ENCODE measurements at regions of chr1 and their contacts with region 1.

Region 1: DNA sequence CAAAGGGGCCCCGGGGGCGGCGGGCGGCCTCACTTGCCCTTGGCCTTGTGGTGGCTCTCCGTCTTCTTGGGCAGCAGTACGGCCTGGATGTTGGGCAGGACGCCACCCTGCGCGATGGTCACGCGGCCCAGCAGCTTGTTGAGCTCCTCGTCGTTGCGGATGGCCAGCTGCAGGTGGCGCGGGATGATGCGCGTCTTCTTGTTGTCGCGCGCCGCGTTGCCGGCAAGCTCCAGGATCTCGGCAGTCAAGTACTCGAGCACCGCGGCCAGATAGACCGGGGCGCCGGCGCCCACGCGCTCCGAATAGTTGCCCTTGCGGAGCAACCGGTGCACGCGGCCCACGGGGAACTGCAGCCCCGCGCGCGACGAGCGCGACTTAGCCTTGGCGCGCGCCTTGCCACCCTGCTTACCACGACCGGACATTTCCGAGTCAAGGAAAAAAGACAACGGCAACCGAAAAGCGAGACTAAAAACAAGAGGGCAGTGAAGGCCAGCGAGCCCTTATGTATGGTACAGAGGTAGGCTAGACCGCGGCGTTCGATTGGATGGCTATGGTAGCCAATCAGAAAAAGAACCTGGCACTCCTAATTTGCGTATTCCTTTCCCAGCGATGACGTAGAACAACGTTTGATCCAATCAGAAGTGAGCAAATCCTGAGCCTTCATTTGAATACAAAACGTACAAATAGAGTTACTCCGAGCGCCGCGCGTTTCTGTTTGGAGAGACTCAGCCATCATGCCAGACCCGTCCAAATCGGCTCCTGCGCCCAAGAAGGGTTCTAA is 29.6 kb upstream of the RNF187 start:
- DNase-seq: peak; percentile 61 to 95 (median 88)
- ATAC-seq: peak; percentile 88
- H3K4me3 ChIP-seq: peak overlapping the region; percentile 78
- H3K4me3 Mint-ChIP-seq: peak overlapping the region; percentile 80 to 97 (median 94)
- H3K27ac ChIP-seq: peak overlapping the region; percentile 87
- H3K27ac Mint-ChIP-seq: peak overlapping the region; percentile 93 to 99 (median 98)
- H3K4me1 ChIP-seq: peaks cover 14 to 17% of the 10 kb centered on the region in 2 donors
- H3K4me1 Mint-ChIP-seq: peaks cover 26 to 64% (median 42%) of the 10 kb centered on the region in 7 donors
- H3K27me3 ChIP-seq: no peaks in the 10 kb centered on the region
- H3K27me3 Mint-ChIP-seq: peaks cover 0 to 7% (median 2%) of the 10 kb centered on the region in 5 donors

Region 2: GRCh38 chr1:227849251-227849650 is 608.3 kb before region 1 on chr1:
- CTCF ChIA-PET with region 1: no interaction called
- POLR2A ChIA-PET with region 1: no interaction called
- intact Hi-C with region 1: no loop called
- DNase-seq: peak in 4 of 9 donors; percentile 6 to 32 (median 19)
- ATAC-seq: peak; percentile 27
- H3K4me3 ChIP-seq: no peak overlapping the region
- H3K4me3 Mint-ChIP-seq: no peak overlapping the region
- H3K27ac ChIP-seq: no peak overlapping the region
- H3K27ac Mint-ChIP-seq: peak overlapping the region in 2 of 9 donors; percentile 38 to 66
- H3K4me1 ChIP-seq: no peaks in the 10 kb centered on the region
- H3K4me1 Mint-ChIP-seq: peaks cover 0 to 13% (median 7%) of the 10 kb centered on the region in 7 donors
- H3K27me3 ChIP-seq: no peaks in the 10 kb centered on the region
- H3K27me3 Mint-ChIP-seq: peaks cover 0 to 7% (median 0%) of the 10 kb centered on the region in 5 donors

Region 3: DNA sequence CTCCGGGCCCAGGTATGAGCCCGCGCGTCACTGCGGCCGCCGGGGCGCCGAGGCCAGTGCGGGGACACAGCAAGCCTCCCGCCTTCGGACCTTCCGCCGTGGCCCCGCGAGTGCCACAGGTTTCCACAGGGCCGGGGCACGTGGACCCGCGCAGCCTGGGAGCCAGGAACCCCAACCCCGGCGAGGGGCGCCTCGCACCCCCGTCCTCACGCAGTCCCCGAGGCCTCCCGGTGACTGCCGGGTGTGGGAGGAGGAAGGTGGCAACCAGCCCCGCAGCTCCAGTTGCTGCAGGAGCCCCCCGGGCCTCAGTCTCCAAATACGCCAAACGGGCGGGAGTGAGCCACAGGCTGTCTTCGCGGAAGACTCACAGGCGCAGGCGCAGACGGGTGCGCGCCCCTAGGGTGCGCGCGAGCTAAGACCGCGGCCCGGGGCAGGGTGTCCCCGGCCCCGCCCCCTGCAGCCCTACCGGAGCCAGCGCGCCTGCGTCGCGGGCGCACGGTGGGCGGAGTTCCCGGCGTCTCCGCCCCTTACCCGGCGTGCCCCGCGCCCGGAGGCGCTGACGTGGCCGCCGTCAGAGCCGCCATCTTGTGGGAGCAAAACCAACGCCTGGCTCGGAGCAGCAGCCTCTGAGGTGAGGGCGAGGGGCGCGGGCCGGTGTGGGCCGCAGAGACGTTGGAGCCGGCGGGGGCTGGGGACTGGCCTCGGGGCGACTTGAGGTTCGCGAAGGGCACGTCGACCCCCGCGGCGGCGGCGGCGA is 375.3 kb before region 1 on chr1 and contains the start of gene ARF1:
- CTCF ChIA-PET with region 1: no interaction called
- POLR2A ChIA-PET with region 1: no interaction called
- intact Hi-C with region 1: loop called in 1 of 2 experiments (anchors 2 kb)
- DNase-seq: peak; percentile 89 to 99 (median 96)
- ATAC-seq: peak; percentile 97
- H3K4me3 ChIP-seq: peak within 1 kb of the TSS; percentile 88
- H3K4me3 Mint-ChIP-seq: peak within 1 kb of the TSS; percentile 89 to 97 (median 95)
- H3K27ac ChIP-seq: peak within 1 kb of the TSS; percentile 97
- H3K27ac Mint-ChIP-seq: peak within 1 kb of the TSS; percentile 76 to 97 (median 95)
- H3K4me1 ChIP-seq: peaks cover 41 to 43% of the 10 kb centered on the region in 2 donors
- H3K4me1 Mint-ChIP-seq: peaks cover 36 to 66% (median 52%) of the 10 kb centered on the region in 7 donors
- H3K27me3 ChIP-seq: no peaks in the 10 kb centered on the region
- H3K27me3 Mint-ChIP-seq: no peaks in the 10 kb centered on the region
- total RNA-seq, gene ARF1: 198 to 390 (median 259) TPM

Region 4: GRCh38 chr1:228131766-228132165 is 325.8 kb before region 1 on chr1:
- CTCF ChIA-PET with region 1: no interaction called
- POLR2A ChIA-PET with region 1: no interaction called
- intact Hi-C with region 1: loop called in 1 of 2 experiments (anchors 2 kb)
- DNase-seq: peak in 1 of 9 donors; percentile 6
- ATAC-seq: no peak
- H3K4me3 ChIP-seq: no peak overlapping the region
- H3K4me3 Mint-ChIP-seq: no peak overlapping the region
- H3K27ac ChIP-seq: no peak overlapping the region
- H3K27ac Mint-ChIP-seq: no peak overlapping the region
- H3K4me1 ChIP-seq: peaks cover 0 to 11% of the 10 kb centered on the region in 2 donors
- H3K4me1 Mint-ChIP-seq: peaks cover 0 to 11% (median 7%) of the 10 kb centered on the region in 7 donors
- H3K27me3 ChIP-seq: no peaks in the 10 kb centered on the region
- H3K27me3 Mint-ChIP-seq: peaks cover 0 to 53% (median 9%) of the 10 kb centered on the region in 5 donors

Region 5: GRCh38 chr1:228212966-228213844 is 244.4 kb before region 1 on chr1:
- CTCF ChIA-PET with region 1: no interaction called
- POLR2A ChIA-PET with region 1: no interaction called
- intact Hi-C with region 1: loop called (anchors 1 kb)
- DNase-seq: peak; percentile 71 to 88 (median 82)
- ATAC-seq: peak; percentile 95
- H3K4me3 ChIP-seq: peak overlapping the region; percentile 68
- H3K4me3 Mint-ChIP-seq: peak overlapping the region; percentile 77 to 95 (median 91)
- H3K27ac ChIP-seq: peak overlapping the region; percentile 73
- H3K27ac Mint-ChIP-seq: peak overlapping the region; percentile 28 to 96 (median 88)
- H3K4me1 ChIP-seq: no peaks in the 10 kb centered on the region
- H3K4me1 Mint-ChIP-seq: peaks cover 3 to 13% (median 5%) of the 10 kb centered on the region in 7 donors
- H3K27me3 ChIP-seq: no peaks in the 10 kb centered on the region
- H3K27me3 Mint-ChIP-seq: no peaks in the 10 kb centered on the region

Region 6: DNA sequence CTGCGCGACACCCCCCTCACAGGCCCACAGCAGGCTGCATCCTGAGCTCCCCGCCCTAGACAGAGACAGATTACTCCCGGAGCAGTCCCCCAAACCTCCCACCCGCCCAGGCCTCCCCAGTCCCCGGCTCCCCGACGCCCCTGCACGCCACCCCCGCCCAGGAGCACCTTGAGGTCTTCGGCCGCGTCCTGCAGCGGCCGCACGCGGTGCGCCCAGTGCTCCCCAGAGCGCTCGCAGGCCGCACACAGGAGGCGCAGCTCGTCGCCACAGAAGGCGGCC is 51.7 kb before region 1 on chr1:
- CTCF ChIA-PET with region 1: no interaction called
- POLR2A ChIA-PET with region 1: interaction called, 9 read pairs
- intact Hi-C with region 1: loop called (anchors 1 kb)
- DNase-seq: no peak
- ATAC-seq: no peak
- H3K4me3 ChIP-seq: peak overlapping the region; percentile 74
- H3K4me3 Mint-ChIP-seq: peak overlapping the region; percentile 80 to 99 (median 94)
- H3K27ac ChIP-seq: peak overlapping the region; percentile 86
- H3K27ac Mint-ChIP-seq: peak overlapping the region; percentile 36 to 92 (median 80)
- H3K4me1 ChIP-seq: peaks cover 36 to 41% of the 10 kb centered on the region in 2 donors
- H3K4me1 Mint-ChIP-seq: peaks cover 46 to 77% (median 56%) of the 10 kb centered on the region in 7 donors
- H3K27me3 ChIP-seq: no peaks in the 10 kb centered on the region
- H3K27me3 Mint-ChIP-seq: no peaks in the 10 kb centered on the region

Region 7: DNA sequence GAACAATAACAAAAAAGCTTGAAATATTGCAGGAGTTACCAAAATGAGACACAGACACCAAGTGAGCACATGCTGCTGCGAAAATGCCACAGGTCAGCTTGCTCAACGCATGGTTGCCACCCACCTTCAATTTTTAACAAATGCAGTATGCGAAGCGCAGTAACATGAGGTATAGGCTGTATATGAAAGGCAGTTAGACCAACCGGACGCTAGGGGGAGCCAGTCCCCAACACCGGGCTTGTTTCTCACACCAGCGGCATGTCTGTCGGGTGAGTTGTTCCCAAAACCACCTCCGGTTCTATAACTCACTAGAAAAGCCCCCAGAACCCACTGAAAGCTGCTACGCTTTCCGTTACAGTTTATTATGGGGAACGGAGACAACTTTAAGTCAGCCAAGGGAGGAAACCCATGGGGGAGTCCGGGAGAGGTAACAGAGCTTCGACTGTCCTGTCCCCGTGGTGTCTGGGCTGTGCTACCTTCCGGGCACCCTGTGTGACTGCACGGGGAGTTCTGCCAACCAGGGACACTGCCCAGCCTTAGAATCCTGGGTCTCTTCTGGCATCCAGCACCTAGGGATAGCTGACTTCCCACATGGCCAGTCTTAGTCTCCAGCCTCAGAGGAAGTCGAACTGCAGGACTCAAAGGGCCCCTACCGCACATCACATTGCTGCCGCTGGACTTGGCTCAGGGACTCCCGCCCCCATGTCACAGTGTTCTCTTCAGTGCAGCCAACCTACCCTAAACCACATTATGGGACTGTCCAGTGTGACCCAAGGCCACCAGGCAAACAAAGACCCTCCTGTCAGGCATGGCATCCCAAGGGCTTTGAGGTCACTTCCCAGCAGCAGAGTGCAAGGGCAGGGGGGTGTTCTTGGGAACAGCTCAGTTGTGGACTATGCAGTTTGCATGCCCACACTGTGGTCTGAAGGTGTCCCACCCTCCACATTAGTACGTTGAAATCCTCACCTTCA is 43.6 kb after region 1 on chr1:
- CTCF ChIA-PET with region 1: no interaction called
- POLR2A ChIA-PET with region 1: no interaction called
- intact Hi-C with region 1: loop called (anchors 5 kb)
- DNase-seq: peak; percentile 72 to 89 (median 85)
- ATAC-seq: peak; percentile 99
- H3K4me3 ChIP-seq: peak overlapping the region; percentile 44
- H3K4me3 Mint-ChIP-seq: peak overlapping the region; percentile 71 to 86 (median 80)
- H3K27ac ChIP-seq: no peak overlapping the region
- H3K27ac Mint-ChIP-seq: peak overlapping the region in 5 of 9 donors; percentile 19 to 72 (median 66)
- H3K4me1 ChIP-seq: peaks cover 9 to 14% of the 10 kb centered on the region in 2 donors
- H3K4me1 Mint-ChIP-seq: peaks cover 9 to 31% (median 18%) of the 10 kb centered on the region in 7 donors
- H3K27me3 ChIP-seq: no peaks in the 10 kb centered on the region
- H3K27me3 Mint-ChIP-seq: peaks cover 0 to 8% (median 0%) of the 10 kb centered on the region in 5 donors

Region 8: DNA sequence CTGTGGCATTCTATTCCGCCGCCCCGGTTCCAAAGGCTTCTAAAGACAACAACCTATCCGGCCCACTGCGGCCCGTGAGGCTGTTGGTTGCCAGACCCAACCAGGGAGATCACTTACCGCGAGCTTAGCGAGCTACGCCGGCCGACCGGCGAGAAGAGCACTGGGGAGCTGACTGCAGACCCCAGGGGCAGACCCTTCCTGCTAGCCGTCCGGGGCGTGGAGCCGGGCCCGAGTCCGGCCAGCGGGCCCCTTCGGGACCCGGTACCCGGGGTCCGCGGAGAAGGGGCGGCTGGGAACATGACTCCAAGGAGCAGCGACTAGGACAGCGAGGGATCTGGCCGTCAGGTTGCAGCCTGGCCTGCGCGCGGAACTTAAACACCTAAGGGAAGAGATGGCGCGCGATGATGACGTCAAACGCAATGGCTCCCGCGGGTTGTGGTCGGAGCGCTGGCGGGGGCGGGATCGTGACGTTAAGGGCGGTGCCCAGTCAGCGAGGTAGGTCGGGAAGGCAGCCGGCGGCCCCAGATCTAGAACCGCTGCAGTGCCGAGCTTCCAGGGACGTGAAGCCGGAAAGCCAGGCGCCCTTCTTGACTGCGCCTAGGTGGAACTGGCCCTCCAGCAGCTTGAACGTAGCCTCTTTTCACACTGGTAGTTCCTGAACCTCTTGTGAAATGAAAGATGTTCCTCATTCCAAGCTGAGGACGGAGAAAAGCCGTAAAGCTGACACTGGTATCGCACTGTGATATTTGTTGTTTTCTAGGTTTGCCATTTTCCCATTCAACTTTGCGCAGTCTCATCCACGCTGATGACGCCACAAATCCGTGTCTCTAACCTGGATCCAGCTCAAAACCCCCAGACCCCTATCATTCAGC is 1050.6 kb after region 1 on chr1 and contains the start of gene NUP133:
- CTCF ChIA-PET with region 1: no interaction called
- POLR2A ChIA-PET with region 1: no interaction called
- intact Hi-C with region 1: loop called (anchors 5 to 10 kb)
- DNase-seq: peak; percentile 93 to 97 (median 97)
- ATAC-seq: peak; percentile 98
- H3K4me3 ChIP-seq: peak within 1 kb of the TSS; percentile 91
- H3K4me3 Mint-ChIP-seq: peak within 1 kb of the TSS; percentile 90 to 98 (median 92)
- H3K27ac ChIP-seq: peak within 1 kb of the TSS; percentile 95
- H3K27ac Mint-ChIP-seq: peak within 1 kb of the TSS; percentile 95 to 99 (median 99)
- H3K4me1 ChIP-seq: peaks cover 4 to 13% of the 10 kb centered on the region in 2 donors
- H3K4me1 Mint-ChIP-seq: peaks cover 10 to 47% (median 38%) of the 10 kb centered on the region in 7 donors
- H3K27me3 ChIP-seq: no peaks in the 10 kb centered on the region
- H3K27me3 Mint-ChIP-seq: peaks cover 0 to 5% (median 2%) of the 10 kb centered on the region in 5 donors
- total RNA-seq, gene NUP133: 24.3 to 45.8 (median 40.4) TPM

Measured in naive thymus-derived CD4-positive, alpha-beta T cell (primary cell).